Endothelial cell of umbilical vein (primary cell): ENCODE measurements at regions of chr9 and their contacts with region 1.

Region 1: GRCh38 chr9:108813951-108814601 is 41.7 kb downstream of the ACTL7B start:
- DNase-seq: peak; percentile 75
- H3K4me3 ChIP-seq: no peak overlapping the region
- H3K27ac ChIP-seq: no peak overlapping the region
- H3K4me1 ChIP-seq: peaks cover 4% of the 10 kb centered on the region
- H3K27me3 ChIP-seq: no peaks in the 10 kb centered on the region
- CTCF ChIP-seq: peak; percentile 38 to 64
- POLR2A ChIP-seq: no peak

Region 2: DNA sequence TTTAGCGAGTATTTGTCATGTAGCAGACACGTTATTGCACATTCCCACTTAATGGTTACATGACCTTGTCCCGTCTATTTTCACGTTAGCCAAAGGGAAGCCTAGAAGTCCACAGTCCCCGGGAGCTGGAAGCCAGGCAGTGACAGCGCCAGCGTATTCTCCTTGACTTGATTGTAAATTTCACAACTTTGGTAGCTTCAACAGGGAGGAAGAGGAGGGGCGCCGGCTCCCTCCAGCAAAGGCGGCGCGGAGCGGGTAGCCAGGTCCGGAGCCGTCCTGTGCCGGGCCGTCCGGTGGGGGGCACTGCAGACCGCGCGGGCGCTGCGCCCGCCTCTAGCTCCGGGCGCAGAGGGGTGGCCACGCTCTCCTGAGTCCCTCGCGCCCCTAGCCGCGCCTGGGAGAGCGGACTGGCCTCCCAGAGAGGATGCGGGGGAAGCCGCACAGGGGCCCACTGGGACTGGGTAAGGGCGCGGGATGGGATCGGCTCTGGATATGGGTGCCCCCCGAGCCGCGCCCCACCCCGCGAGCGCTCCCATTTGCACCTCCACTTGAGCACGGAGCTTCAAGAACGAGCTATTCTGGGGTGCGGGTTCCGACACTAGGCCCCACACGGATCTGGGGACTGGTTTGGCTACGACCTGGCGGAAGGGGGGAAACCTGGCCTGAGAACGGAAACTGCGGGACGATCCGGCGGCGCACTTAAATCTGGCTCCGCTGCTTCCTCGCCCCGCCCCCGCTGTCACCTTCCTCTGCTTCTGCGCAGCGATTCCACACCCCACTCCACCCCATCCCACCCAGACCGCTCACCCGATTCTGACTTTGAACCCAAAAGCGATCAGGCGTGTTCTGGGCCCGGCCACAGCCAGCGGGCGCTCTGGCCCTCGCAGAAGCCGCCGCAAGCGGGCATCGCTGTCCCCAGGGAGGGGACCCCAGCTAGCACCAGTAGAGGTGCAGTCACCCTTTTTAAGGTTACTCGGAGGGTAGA is 1348.3 kb before region 1 on chr9:
- CTCF ChIA-PET with region 1: interaction called, 14 read pairs
- POLR2A ChIA-PET with region 1: no interaction called
- dilution Hi-C with region 1: no loop called
- intact Hi-C with region 1: no loop called
- DNase-seq: peak; percentile 47
- H3K4me3 ChIP-seq: peak overlapping the region; percentile 32 to 57 (median 46)
- H3K27ac ChIP-seq: no peak overlapping the region
- H3K4me1 ChIP-seq: peaks cover 3% of the 10 kb centered on the region
- H3K27me3 ChIP-seq: peaks cover 0 to 3% of the 10 kb centered on the region in 2 experiments
- CTCF ChIP-seq: peak; percentile 86 to 88
- POLR2A ChIP-seq: no peak

Region 3: GRCh38 chr9:108468402-108468801 is 345.7 kb before region 1 on chr9:
- CTCF ChIA-PET with region 1: no interaction called
- POLR2A ChIA-PET with region 1: no interaction called
- dilution Hi-C with region 1: no loop called
- intact Hi-C with region 1: loop called (anchors 1 kb)
- DNase-seq: peak; percentile 36
- H3K4me3 ChIP-seq: no peak overlapping the region
- H3K27ac ChIP-seq: no peak overlapping the region
- H3K4me1 ChIP-seq: peaks cover 9% of the 10 kb centered on the region
- H3K27me3 ChIP-seq: no peaks in the 10 kb centered on the region
- CTCF ChIP-seq: peak; percentile 62 to 63
- POLR2A ChIP-seq: no peak

Region 4: DNA sequence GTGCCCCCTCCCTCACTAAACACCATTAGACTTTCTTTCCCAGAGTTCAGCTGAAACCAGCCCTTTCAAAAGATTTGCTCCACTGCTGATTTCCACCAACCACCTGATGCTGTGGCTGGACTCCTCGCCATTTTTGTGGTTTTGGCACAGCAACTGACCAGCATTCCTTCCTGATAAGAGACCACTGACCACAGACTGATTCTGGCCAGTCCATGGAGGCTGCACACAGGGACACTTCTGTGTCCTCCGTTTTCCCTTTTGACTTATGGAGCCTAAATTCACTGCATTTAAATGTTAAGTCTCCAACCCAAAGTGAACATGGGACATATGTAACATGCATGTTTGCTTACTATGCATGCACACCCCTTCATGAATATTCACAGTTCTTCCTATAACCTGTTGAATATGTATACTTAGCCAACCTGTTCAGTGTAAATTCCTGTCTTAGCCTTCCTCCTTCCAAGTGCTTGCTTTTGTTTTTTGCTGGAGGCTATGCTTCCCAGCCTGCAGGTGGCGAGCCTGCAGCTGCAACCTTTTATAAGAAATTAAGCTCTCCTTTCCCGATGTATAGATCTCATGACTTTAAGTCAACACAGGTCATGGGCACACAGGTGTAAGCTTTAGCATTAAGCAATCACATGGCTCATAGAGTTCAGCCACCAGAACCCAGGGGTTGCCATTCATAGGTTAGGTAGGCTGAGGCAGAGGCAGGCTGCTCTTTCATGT is 37.0 kb before region 1 on chr9:
- CTCF ChIA-PET with region 1: interaction called, 10 read pairs
- POLR2A ChIA-PET with region 1: no interaction called
- dilution Hi-C with region 1: no loop called
- intact Hi-C with region 1: no loop called
- DNase-seq: no peak
- H3K4me3 ChIP-seq: no peak overlapping the region
- H3K27ac ChIP-seq: no peak overlapping the region
- H3K4me1 ChIP-seq: no peaks in the 10 kb centered on the region
- H3K27me3 ChIP-seq: no peaks in the 10 kb centered on the region
- CTCF ChIP-seq: no peak
- POLR2A ChIP-seq: no peak